Sigmoid colon (tissue), 7 donors: ENCODE measurements at regions of chr7 and their contacts with region 1.

Region 1: DNA sequence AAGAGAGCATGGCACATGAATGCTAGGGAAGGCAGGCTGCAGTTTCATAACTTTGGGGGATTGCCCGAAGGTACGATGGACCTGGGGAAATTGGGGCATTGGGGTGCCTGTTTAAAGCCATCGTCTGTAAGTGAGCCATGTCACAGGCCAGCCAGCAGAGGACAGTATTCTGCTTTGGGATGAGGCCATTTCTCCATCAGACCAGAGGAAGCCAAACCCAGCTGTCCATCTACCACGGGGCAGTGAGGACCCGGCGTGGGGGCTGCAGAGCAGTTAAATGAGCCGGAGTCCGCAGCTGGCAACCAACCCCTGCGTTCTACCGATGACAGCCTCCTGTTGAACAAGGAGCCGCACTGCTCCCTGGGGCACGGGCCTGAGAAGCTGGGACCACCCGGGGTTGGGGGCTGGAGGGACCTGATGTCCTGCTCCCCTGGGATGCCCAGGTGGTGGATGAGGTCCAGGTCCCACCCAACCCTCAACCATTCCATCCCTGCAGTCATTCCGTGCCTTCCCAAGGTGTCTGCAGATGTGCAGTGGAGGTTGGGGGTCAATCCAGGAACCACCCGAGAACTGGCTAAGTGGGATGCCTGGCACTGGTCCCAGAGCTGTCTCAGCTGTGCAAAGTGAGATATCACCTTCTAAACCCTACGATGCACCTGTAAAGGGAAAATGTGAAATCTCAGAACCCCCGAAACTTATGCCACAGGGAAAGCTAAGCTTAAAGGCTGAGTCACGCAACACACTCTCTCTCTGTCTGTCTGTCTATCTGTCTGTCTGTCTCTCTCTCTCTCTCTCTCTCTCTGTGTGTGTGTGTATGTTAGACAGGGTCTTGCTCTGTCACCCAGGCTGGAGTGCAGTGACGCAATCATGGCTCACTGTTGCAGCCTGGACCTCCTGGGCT is 12.1 kb upstream of the RHBDD2 start:
- DNase-seq: peak; percentile 77
- H3K4me3 ChIP-seq: no peak overlapping the region
- H3K27ac ChIP-seq: no peak overlapping the region
- H3K4me1 ChIP-seq: peaks cover 0 to 4% (median 0%) of the 10 kb centered on the region in 4 donors
- H3K27me3 ChIP-seq: no peaks in the 10 kb centered on the region
- CTCF ChIP-seq: peak; percentile 82 to 95 (median 94)
- EP300 ChIP-seq: no peak
- POLR2A ChIP-seq: no peak

Region 2: DNA sequence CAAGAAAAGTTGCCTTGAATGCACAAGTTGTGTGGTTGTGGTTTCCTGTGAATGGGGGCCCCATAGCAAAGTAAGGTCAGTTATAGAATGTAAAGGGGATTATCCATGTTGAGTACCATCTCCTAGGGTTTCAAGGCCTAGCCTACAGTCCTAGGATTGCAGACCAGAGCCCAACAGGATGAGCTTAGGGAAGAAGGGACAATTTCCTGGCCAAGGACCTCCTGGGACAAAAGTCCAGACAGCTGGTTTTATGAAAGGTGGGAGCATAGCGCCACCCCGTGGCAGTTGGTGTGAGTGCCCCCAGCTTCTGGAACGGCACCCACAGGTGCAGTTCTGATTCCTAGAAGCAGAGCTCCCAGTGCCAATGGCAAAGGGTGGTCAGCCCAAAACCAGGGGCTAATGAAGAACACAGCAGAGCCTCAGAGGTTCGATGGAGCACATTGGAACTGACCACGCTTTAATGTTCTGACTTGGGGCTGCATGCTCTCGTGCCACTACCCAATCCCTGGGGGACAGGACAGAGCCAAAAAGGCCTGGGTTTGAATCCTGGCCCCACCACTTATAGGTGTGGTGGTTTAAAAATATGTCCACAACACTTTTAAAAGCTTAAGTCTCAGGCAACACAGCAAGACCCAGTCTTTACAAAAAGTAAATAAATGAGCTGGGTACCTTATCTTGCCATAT is 153.4 kb after region 1 on chr7:
- intact Hi-C with region 1: loop called (anchors 1 kb)
- DNase-seq: peak; percentile 82
- H3K4me3 ChIP-seq: no peak overlapping the region
- H3K27ac ChIP-seq: no peak overlapping the region
- H3K4me1 ChIP-seq: peaks cover 0 to 5% (median 0%) of the 10 kb centered on the region in 4 donors
- H3K27me3 ChIP-seq: no peaks in the 10 kb centered on the region
- CTCF ChIP-seq: peak; percentile 81 to 91 (median 89)
- EP300 ChIP-seq: no peak
- POLR2A ChIP-seq: no peak